Activated CD4-positive, alpha-beta T cell treated with anti-CD3 and anti-CD28 coated beads, Interleukin-2, amount 10 ng/mL, durations not matched to agents 7 days and 5 days (primary cell): ENCODE measurements at regions of chr10 and their contacts with region 1.

Region 1: DNA sequence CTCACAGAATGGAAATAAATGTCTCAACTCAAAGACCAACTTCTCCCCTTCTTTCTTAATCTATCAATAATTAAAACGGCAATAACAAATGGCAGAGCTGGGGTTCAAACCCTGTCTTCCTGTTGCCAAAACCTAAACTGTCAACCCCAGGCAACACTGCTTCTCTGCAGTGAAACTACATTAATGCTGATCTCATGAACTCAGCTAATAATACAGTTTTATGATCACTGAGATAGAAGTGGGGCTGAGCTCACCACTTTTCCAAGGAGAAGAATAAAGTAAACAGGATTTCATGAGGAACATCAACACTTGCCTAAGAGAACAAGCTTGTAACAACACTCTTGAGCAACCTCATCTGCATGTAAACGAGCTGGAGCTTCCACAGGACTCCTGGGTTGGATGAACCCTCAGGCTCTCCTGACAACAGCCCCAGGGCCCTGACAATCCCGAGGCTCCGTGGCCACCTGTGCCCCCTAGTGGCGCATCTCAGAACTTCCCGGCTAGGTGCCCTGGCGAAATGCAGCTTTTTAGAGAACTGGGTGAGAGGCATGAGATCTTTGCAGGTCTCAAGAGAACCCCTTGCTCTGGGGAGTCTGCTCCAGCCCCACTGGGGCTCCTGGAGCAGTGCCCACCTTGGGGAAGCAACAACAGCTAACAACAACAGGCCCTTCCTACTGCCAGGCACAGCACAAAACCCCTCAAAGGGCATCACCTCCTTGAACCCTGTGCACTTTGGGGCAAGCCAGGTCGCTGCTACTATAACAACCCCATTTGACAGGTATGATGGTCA is 169.3 kb downstream of the SH3PXD2A start:
- DNase-seq: peak; percentile 77
- H3K4me3 Mint-ChIP-seq: no peak overlapping the region
- H3K27ac Mint-ChIP-seq: no peak overlapping the region
- H3K4me1 Mint-ChIP-seq: peaks cover 9% of the 10 kb centered on the region
- H3K27me3 Mint-ChIP-seq: peaks cover 9% of the 10 kb centered on the region

Region 2: DNA sequence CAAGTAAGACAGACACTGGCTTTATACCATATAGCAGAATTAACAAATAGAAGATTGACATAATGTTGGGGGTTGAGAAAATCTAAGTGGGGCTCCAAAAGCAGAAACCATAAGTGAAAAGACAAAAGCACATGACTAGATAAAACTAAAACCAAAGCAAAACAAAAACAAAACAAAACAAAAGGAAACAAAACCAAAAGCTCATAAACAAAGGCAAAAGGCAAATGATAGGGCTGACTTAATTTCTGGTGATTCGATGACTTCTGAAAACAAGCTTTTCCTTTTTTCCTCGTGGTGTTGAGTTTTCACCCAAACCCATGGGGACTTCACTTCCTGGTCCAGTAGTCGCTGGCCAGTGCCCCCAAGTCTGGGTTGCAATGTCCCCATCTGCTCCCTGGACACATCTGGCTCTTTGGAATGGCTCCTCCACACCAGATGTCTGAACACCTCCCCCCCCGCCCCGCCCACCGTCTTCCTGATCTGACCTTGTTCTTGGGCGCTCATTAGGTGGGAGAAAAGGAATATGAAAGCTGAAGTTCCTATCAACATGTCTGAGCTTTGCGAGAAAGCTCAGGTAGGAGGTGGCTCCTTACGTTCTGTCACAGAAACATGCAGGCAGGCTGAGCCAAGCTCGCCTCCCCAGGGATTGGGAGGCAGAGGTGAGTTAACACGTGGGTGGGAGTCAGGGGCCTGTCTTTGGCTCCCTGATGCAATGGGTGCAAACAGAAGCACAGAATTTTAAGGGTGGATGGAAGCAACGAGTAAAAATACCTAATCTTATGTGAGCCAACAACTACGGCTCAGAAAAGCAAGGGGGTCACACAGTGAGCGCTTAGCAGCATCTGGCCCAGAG is 71.5 kb before region 1 on chr10:
- CTCF ChIA-PET with region 1: no interaction called
- POLR2A ChIA-PET with region 1: interaction called, 10 read pairs
- DNase-seq: no peak
- H3K4me3 Mint-ChIP-seq: no peak overlapping the region
- H3K27ac Mint-ChIP-seq: no peak overlapping the region
- H3K4me1 Mint-ChIP-seq: peaks cover 2% of the 10 kb centered on the region
- H3K27me3 Mint-ChIP-seq: no peaks in the 10 kb centered on the region

Region 3: DNA sequence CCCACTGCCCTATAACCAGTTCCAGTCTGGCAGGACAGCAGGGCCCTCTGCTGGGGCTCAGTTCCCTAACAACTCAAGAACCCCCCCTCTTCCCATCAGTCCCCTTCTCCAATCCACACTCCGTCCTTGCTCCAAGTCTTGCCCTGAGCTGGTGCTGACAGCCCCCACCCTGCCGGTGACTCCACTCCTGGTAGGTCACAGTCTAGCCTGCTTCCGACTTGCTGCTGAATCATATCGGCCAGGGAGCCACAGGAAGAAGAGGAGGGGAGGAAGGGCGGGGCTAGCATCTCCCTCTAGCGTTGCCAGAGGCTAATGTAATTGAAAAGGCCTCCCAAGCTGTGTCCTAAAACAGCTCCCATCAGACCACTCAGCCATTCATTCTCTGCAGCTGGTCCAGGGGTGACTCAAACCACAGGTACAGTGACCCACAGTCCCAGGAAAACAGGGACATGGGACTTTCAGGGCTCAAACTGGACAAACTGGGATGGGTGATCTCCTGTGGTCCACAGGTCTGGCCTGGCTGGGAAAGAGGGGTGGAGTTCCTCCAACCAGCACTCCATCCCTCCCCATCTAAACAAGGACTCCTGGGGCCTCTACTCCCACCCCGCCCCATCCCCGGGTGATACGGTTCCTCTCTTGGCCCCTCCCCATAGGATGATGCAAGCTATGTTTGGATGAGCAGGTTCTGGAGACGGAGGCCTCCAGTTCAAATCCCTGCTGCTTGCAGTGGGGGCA is 10.5 kb after region 1 on chr10:
- CTCF ChIA-PET with region 1: interaction called, 33 read pairs
- POLR2A ChIA-PET with region 1: no interaction called
- DNase-seq: peak; percentile 83
- H3K4me3 Mint-ChIP-seq: peak overlapping the region; percentile 47
- H3K27ac Mint-ChIP-seq: peak overlapping the region; percentile 91
- H3K4me1 Mint-ChIP-seq: peaks cover 40% of the 10 kb centered on the region
- H3K27me3 Mint-ChIP-seq: peaks cover 4% of the 10 kb centered on the region